ENCODE measurements at regions of chr10 and their contacts with region 1.

Region 1: GRCh38 chr10:89793649-89794254 is 92.4 kb downstream of the KIF20B start:
- DNase-seq: peak; percentile 30
- ATAC-seq: peak; percentile 92
- H3K4me3 ChIP-seq: no peak overlapping the region
- H3K27ac ChIP-seq: no peak overlapping the region
- H3K4me1 ChIP-seq: no peaks in the 10 kb centered on the region
- H3K27me3 ChIP-seq: no peaks in the 10 kb centered on the region
- CTCF ChIP-seq: peak; percentile 70 to 79 (median 71)
- EP300 ChIP-seq: no peak
- POLR2A ChIP-seq: no peak
- RAD21 ChIP-seq: peak; percentile 99

Region 2: GRCh38 chr10:89426230-89426868 is 367.4 kb before region 1 on chr10:
- CTCF ChIA-PET with region 1: no interaction called
- POLR2A ChIA-PET with region 1: no interaction called
- RAD21 ChIA-PET with region 1: no interaction called
- SMC1A ChIA-PET with region 1: no interaction called
- in situ Hi-C with region 1: no loop called
- intact Hi-C with region 1: loop called (anchors 10 kb)
- DNase-seq: no peak
- ATAC-seq: peak; percentile 87
- H3K4me3 ChIP-seq: no peak overlapping the region
- H3K27ac ChIP-seq: no peak overlapping the region
- H3K4me1 ChIP-seq: no peaks in the 10 kb centered on the region
- H3K27me3 ChIP-seq: no peaks in the 10 kb centered on the region
- CTCF ChIP-seq: peak; percentile 66 to 85 (median 79); a peak in 4 of 6 replicates
- EP300 ChIP-seq: no peak
- POLR2A ChIP-seq: no peak
- RAD21 ChIP-seq: peak; percentile 86

Region 3: DNA sequence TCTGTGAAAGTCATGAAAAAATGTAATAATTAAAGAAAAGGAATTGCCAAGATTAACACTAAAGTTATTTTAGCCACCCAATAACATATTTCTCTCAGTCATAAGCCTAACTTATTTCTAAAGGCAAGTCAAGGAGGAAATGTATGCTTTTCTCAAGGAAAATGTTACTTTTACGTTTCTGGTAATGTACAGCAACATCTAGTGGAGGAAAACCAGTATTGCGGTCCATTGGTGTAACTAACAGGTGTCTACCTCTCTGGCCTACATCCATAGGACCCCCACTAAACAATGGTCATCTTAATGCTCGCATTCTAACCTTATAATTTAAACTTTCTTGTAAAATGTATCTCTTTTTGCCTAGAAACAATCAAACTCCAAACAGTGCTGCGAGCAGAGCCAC is 345.1 kb after region 1 on chr10:
- CTCF ChIA-PET with region 1: interaction called, 5 read pairs
- POLR2A ChIA-PET with region 1: no interaction called
- RAD21 ChIA-PET with region 1: interaction called, 3 read pairs
- SMC1A ChIA-PET with region 1: interaction called, 4 read pairs
- in situ Hi-C with region 1: loop called (anchors 5 kb)
- intact Hi-C with region 1: loop called (anchors 1 kb)
- DNase-seq: no peak
- ATAC-seq: no peak
- H3K4me3 ChIP-seq: no peak overlapping the region
- H3K27ac ChIP-seq: no peak overlapping the region
- H3K4me1 ChIP-seq: no peaks in the 10 kb centered on the region
- H3K27me3 ChIP-seq: no peaks in the 10 kb centered on the region
- CTCF ChIP-seq: peak in 2 of 3 experiments; percentile 43 to 44; a peak in 3 of 6 replicates
- EP300 ChIP-seq: no peak
- POLR2A ChIP-seq: no peak
- RAD21 ChIP-seq: peak; percentile 42

Region 4: GRCh38 chr10:90437452-90437851 is 643.7 kb after region 1 on chr10:
- CTCF ChIA-PET with region 1: no interaction called
- POLR2A ChIA-PET with region 1: no interaction called
- RAD21 ChIA-PET with region 1: no interaction called
- SMC1A ChIA-PET with region 1: no interaction called
- in situ Hi-C with region 1: no loop called
- intact Hi-C with region 1: loop called (anchors 10 kb)
- DNase-seq: no peak
- ATAC-seq: peak; percentile 55
- H3K4me3 ChIP-seq: no peak overlapping the region
- H3K27ac ChIP-seq: no peak overlapping the region
- H3K4me1 ChIP-seq: no peaks in the 10 kb centered on the region
- H3K27me3 ChIP-seq: no peaks in the 10 kb centered on the region
- CTCF ChIP-seq: 0 out of 6 replicates have a peak, but pooled peaks of 1 of the 3 experiments have one; percentile 1
- EP300 ChIP-seq: no peak
- POLR2A ChIP-seq: no peak
- RAD21 ChIP-seq: no peak

Region 5: DNA sequence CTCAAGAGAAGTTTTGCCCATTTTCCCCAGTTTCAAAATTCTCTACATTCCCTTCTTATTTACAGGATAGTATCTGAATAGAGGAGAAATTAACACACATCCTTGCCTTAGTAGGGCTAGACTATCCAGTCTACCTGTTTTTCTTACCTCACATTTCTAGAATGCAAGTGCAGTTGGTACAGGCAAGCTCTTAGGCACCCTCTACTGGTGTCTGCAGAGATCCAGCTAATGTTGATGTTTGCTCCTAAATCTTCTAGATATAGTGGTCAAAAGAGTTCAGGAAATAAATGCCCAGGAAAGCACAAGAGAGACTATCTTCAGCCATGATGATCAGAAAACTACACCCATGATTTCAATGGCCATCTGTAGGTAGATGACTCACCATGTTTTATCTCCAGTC is 858.8 kb after region 1 on chr10:
- CTCF ChIA-PET with region 1: interaction called, 4 read pairs
- POLR2A ChIA-PET with region 1: no interaction called
- RAD21 ChIA-PET with region 1: no interaction called
- SMC1A ChIA-PET with region 1: no interaction called
- in situ Hi-C with region 1: no loop called
- intact Hi-C with region 1: loop called (anchors 5 kb)
- DNase-seq: no peak
- ATAC-seq: peak; percentile 62
- H3K4me3 ChIP-seq: no peak overlapping the region
- H3K27ac ChIP-seq: no peak overlapping the region
- H3K4me1 ChIP-seq: no peaks in the 10 kb centered on the region
- H3K27me3 ChIP-seq: no peaks in the 10 kb centered on the region
- CTCF ChIP-seq: peak; percentile 27 to 37 (median 35); a peak in 4 of 6 replicates
- EP300 ChIP-seq: no peak
- POLR2A ChIP-seq: no peak
- RAD21 ChIP-seq: peak; percentile 50

Region 6: GRCh38 chr10:90787393-90788198 is 993.8 kb after region 1 on chr10:
- CTCF ChIA-PET with region 1: interaction called, 8 read pairs
- POLR2A ChIA-PET with region 1: no interaction called
- RAD21 ChIA-PET with region 1: no interaction called
- SMC1A ChIA-PET with region 1: interaction called, 3 read pairs
- in situ Hi-C with region 1: no loop called
- intact Hi-C with region 1: loop called (anchors 1 kb)
- DNase-seq: no peak
- ATAC-seq: peak; percentile 78
- H3K4me3 ChIP-seq: no peak overlapping the region
- H3K27ac ChIP-seq: no peak overlapping the region
- H3K4me1 ChIP-seq: no peaks in the 10 kb centered on the region
- H3K27me3 ChIP-seq: 0 out of 4 replicates have a peak, but pooled peaks cover 0 to 1% of the 10 kb centered on the region in 2 experiments
- CTCF ChIP-seq: peak; percentile 65 to 72 (median 67)
- EP300 ChIP-seq: no peak
- POLR2A ChIP-seq: no peak
- RAD21 ChIP-seq: peak; percentile 65

Measured in GM12878 (cell line).